ENCODE measurements at regions of chr15 and their contacts with region 1.

Region 1: DNA sequence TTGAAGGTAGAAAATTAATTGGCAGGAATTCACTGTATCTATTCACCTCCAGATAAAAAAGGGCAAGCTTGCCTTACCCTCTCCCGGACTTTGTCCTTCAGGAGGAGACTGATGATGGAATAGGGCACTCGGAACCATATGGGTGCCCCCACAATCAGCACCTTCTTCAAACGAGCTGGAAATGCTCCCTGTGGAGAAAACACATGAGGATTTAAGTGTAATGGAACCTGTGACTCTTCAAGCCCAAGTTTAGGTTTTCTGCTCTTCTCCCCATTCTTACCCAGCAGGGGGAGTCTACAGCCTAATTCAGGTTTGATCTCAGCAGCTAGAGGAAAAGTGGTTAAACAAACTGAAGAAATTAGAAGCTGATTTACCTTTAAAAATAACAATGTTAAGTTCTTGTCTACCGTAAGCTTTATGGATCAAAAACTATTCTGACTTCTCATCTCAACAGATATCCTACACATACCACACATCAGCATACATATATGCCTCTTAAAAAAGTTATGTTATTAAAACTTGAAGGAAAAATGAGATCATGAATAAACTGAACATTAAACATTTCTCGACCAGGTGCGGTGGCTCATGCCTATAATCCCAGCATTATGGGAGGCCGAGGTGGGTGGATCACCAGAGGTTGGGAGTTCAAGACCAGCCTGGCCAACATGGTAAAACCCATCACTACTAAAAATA is 57.5 kb upstream of the SIN3A start:
- DNase-seq: peak; percentile 58
- H3K4me3 ChIP-seq: no peak overlapping the region
- H3K27ac ChIP-seq: no peak overlapping the region
- H3K4me1 ChIP-seq: no peaks in the 10 kb centered on the region
- H3K27me3 ChIP-seq: no peaks in the 10 kb centered on the region
- CTCF ChIP-seq: peak; percentile 30 to 61
- POLR2A ChIP-seq: no peak

Region 2: DNA sequence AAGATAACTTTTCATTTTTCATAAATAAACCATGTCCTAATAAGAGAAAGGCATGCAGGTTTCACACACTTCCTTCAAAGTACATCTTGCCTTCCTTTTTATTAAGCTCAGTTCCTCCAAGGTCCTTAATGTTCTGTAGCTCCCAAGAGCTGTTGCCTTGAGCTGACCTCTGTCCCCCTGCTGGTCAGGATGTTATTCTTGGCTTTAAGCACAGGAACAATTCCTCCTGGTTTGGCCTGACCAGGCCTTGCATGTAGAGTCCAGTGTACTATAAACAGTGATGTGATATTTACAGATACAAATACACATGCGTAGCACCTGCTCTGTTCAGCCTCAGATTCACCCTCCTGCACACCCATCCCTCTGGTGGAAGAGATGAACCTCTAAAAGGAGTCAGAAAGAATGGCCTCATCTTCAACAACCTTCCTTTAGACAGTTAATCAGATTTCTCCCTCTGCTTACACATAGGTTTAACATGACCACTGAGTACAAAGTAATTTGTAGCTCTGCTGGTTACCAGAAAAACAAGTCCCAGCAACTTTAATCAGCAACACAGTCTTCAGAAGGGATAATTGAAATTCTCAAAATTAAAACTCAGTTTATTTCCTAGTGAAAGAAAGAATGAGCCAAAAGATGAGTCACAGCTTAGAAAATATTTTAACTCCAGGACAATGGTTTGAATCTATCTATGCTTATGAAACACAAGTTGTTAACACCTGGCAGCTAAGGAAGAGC is 23.6 kb after region 1 on chr15:
- CTCF ChIA-PET with region 1: interaction called, 13 read pairs
- POLR2A ChIA-PET with region 1: no interaction called
- dilution Hi-C with region 1: no loop called
- intact Hi-C with region 1: no loop called
- DNase-seq: peak; percentile 91
- H3K4me3 ChIP-seq: no peak overlapping the region
- H3K27ac ChIP-seq: peak overlapping the region; percentile 27
- H3K4me1 ChIP-seq: peaks cover 24% of the 10 kb centered on the region
- H3K27me3 ChIP-seq: no peaks in the 10 kb centered on the region
- CTCF ChIP-seq: peak; percentile 6 to 26
- POLR2A ChIP-seq: no peak

Region 3: GRCh38 chr15:75597667-75598341 is 88.8 kb after region 1 on chr15:
- CTCF ChIA-PET with region 1: interaction called, 15 read pairs
- POLR2A ChIA-PET with region 1: no interaction called
- dilution Hi-C with region 1: no loop called
- intact Hi-C with region 1: no loop called
- DNase-seq: peak; percentile 36
- H3K4me3 ChIP-seq: no peak overlapping the region
- H3K27ac ChIP-seq: no peak overlapping the region
- H3K4me1 ChIP-seq: peaks cover 9% of the 10 kb centered on the region
- H3K27me3 ChIP-seq: no peaks in the 10 kb centered on the region
- CTCF ChIP-seq: peak; percentile 15 to 30
- POLR2A ChIP-seq: no peak

Measured in endothelial cell of umbilical vein (primary cell).